Testis (tissue), 5 donors: ENCODE measurements at regions of chr4 and their contacts with region 1.

Region 1: DNA sequence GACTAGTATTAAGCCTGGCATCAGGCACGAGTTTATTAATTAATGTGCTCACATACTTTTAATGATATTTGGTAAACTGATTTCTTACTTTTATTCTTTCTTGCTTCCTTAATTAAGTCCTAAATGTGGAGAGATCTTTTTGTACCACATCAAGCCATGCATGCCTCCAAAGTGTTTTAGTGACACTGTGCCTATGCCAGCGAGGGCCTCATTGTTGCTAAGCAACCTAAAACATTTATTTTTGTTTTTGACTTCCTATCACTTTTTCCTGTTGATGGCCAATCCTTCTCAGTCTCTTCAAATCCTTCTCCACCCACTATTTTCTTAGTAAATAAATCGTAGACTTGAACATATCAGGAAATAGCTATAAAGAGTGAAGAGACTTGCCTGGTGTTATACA is 5.5 kb upstream of the NSUN7 start:
- DNase-seq: no peak
- H3K4me3 ChIP-seq: no peak overlapping the region
- H3K27ac ChIP-seq: no peak overlapping the region
- H3K4me1 ChIP-seq: no peaks in the 10 kb centered on the region
- H3K27me3 ChIP-seq: no peaks in the 10 kb centered on the region
- CTCF ChIP-seq: no peak
- POLR2A ChIP-seq: no peak

Region 2: GRCh38 chr4:40672536-40673526 is 71.4 kb before region 1 on chr4:
- intact Hi-C with region 1: no loop called
- DNase-seq: peak; percentile 52
- H3K4me3 ChIP-seq: no peak overlapping the region
- H3K27ac ChIP-seq: peak overlapping the region; percentile 44 to 54
- H3K4me1 ChIP-seq: peaks cover 10% of the 10 kb centered on the region
- H3K27me3 ChIP-seq: no peaks in the 10 kb centered on the region
- CTCF ChIP-seq: no peak
- POLR2A ChIP-seq: no peak

Region 3: DNA sequence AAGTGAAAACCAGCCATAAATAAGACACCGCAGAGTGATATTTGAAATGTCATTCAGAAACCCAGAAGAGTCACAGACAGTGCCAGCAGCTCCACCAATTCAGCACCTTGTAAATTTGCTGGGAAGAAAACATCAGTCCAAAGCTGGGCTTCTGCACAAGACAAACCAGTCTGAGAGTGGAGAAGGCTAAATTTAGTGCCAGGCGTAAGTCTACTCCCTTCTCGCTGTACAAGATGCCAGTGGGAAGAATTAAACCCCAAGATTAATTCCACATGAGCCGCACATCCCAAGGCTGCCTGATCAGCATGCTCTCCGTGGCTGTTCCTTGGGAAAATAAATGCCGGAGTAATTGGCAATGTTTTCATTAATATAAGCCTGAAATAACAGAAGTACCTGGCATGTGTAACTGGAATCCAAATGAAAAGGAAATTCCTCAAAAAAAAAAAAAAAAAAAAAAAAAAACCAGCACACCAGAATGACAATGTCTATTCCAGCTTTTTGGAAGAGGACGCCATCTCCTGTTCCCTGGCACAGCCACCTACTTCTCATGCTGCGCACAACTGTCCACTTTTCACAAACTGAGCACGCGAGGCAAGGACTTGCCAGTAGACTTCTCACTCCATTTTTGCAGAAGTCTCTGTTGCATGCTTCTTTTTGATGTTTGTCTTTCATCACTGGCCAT is 101.1 kb after region 1 on chr4:
- intact Hi-C with region 1: loop called (anchors 5 kb)
- DNase-seq: no peak
- H3K4me3 ChIP-seq: no peak overlapping the region
- H3K27ac ChIP-seq: no peak overlapping the region
- H3K4me1 ChIP-seq: peaks cover 15% of the 10 kb centered on the region
- H3K27me3 ChIP-seq: no peaks in the 10 kb centered on the region
- CTCF ChIP-seq: no peak
- POLR2A ChIP-seq: no peak

Region 4: DNA sequence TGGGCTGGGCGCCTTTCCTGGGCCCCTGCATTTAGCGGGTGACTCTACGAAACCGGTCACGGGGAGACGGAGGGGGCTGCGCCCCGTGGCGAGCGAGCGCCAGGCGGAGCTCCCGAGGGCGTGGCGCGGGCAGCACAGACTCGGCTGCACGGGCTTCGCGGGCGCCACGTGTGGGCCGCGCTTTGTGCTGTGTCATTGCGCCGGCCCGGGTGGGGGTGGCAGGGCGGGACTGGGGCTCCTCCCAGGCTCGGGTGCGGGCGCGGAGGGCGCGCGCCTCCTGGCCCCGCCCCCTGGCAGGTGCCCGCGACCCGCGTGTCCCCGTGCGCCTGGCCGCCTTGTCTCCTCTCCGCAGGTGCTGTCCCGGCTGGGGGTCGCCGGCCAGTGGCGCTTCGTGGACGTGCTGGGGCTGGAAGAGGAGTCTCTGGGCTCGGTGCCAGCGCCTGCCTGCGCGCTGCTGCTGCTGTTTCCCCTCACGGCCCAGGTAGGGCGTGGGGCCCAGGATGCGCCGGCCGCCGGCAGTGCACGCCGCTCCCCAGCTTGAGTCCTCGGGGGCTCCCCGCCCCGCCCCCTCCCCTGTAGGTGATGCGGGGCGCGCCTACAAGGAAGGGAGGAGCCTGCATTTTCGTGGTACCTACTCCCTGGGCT is 513.2 kb after region 1 on chr4:
- intact Hi-C with region 1: no loop called
- DNase-seq: peak; percentile 62
- H3K4me3 ChIP-seq: peak overlapping the region; percentile 53 to 70
- H3K27ac ChIP-seq: no peak overlapping the region
- H3K4me1 ChIP-seq: peaks cover 5% of the 10 kb centered on the region
- H3K27me3 ChIP-seq: no peaks in the 10 kb centered on the region
- CTCF ChIP-seq: no peak
- POLR2A ChIP-seq: no peak